Right ventricle myocardium superior (tissue), 1 donor: ENCODE measurements at regions of chr1 and their contacts with region 1.

Region 1: GRCh38 chr1:16055613-16056520 is 12.3 kb downstream of the CLCNKB start:
- DNase-seq: peak; percentile 91
- ATAC-seq: peak; percentile 85

Region 2: DNA sequence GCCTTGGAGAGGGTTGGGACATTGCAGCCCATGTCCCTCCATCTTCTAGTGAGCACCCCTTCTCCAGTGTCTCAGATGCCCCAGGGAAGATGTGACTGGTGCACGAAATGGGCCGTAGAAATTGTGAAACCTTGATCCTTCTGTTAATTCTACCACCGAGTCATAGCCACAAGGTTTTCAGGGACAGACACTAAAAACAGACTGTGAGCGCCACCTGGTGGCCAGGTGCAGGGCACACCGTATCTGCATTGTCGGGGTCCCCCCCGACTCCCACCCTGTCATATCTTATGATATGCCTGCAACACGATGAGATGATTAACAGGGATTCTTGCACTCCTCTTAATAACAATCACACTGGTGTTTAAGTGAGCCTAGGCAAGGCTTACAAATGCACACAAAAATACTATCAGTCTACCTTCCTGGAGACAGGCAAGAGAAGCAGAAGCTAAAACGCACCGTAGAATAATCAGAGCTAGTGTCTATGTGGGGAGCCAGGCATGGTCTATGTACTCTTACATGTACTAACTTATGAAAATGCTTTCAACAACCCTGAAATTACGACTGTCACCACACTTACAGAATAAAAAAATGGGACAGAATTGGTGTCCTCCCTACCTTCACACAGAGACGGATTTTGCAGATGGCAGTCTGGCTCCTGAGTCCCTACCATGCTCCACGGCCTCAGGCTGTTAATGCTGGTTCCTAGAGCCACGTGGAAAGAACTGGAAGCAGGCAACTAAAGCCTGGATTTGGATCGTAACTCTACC is 751.0 kb before region 1 on chr1:
- intact Hi-C with region 1: no loop called
- DNase-seq: peak; percentile 79
- ATAC-seq: peak; percentile 73

Region 3: GRCh38 chr1:15799004-15799936 is 256.6 kb before region 1 on chr1:
- intact Hi-C with region 1: loop called (anchors 10 kb)
- DNase-seq: peak; percentile 71
- ATAC-seq: peak; percentile 62

Region 4: GRCh38 chr1:16009030-16009709 is 46.7 kb before region 1 on chr1:
- intact Hi-C with region 1: loop called (anchors 5 kb)
- DNase-seq: peak; percentile 88
- ATAC-seq: no peak

Region 5: DNA sequence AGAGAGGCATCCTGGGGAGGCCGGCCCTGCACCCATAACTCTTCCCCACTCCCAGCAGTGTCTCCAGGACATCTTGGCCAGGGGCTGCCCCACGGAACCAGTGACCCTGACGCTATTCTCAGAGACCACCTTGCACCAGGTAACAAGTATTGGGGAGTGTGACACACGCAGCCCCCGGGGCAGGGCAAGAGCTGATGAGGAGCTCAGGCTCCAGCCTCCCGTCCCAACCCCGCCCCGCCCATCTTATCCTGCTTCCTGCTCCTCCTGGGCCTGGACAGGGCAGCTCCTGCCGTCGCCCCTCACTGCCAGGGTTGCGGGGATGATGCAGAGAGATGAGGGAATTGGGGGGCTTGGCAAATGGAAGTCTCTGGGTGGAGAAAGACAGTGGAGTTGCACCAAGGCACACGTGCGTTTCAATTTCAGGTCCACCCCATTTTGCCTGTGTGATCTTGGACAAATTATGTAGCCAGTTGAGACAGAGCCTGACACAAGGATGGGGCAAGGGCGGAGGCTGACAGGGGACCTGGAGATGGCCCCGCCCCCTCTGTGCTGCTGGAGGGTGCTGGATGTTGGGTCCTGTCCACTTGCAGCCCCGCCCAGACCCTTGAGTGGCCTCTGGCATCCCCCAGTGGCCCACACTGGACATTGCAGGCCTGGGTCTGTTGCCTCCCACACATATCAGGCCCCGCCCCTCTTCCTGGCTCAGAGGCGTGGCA is 23.3 kb before region 1 on chr1:
- intact Hi-C with region 1: loop called (anchors 2 kb)
- DNase-seq: peak; percentile 92
- ATAC-seq: peak; percentile 96

Region 6: DNA sequence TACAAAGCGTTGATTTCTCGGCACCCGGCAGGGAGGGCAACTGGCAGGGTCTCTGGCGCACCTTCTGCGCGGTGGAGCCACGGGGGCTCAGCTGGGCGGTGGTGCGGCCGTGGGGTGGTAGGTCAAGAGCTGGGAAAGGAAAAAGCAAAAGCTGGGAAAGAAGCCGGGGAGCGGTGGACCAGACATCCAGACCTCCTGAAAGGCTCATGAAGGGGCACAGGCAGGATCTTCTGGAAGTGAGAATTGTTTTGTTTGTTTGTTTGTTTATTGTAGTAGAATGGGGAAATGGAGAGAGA is 465.4 kb after region 1 on chr1:
- intact Hi-C with region 1: no loop called
- DNase-seq: no peak
- ATAC-seq: no peak